Lower leg skin (tissue), 4 donors: ENCODE measurements at regions of chr17 and their contacts with region 1.

Region 1: GRCh38 chr17:33611532-33611931 is 318.4 kb upstream of the ASIC2 start:
- DNase-seq: no peak
- H3K4me3 ChIP-seq: no peak overlapping the region
- CTCF ChIP-seq: no peak
- POLR2A ChIP-seq: no peak

Region 2: GRCh38 chr17:32777436-32777835 is 834.1 kb before region 1 on chr17:
- intact Hi-C with region 1: loop called (anchors 5 kb)
- DNase-seq: no peak
- H3K4me3 ChIP-seq: no peak overlapping the region
- CTCF ChIP-seq: no peak
- POLR2A ChIP-seq: no peak

Region 3: DNA sequence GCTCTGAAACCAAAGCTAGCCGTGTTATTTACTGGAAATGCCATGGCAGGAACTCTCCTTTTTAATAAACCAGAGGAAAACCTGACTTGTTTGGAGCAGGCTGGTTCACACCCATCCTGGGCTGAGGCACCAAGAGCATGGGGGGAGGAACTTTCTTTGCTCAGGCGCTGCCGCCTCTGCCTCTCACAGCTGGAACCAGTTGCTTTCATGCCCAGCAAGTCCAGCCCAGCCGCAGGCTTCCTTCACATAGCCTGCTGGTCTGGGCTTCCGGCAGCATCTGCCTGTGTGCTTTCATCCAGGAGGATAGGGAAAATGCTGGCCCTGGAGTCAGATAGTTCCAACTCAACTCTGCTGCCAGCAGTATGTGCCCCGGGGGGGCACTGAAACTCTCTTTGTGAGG is 230.3 kb before region 1 on chr17:
- intact Hi-C with region 1: no loop called
- DNase-seq: no peak
- H3K4me3 ChIP-seq: no peak overlapping the region
- CTCF ChIP-seq: no peak
- POLR2A ChIP-seq: no peak